Activated CD8-positive, alpha-beta memory T cell treated with anti-CD3 and anti-CD28 coated beads, Interleukin-2, amount 10 ng/mL, durations not matched to agents 7 days and 5 days (primary cell): ENCODE measurements at regions of chr15 and their contacts with region 1.

Region 1: GRCh38 chr15:58070801-58071418 is 5.4 kb upstream of the ALDH1A2 start:
- DNase-seq: peak; percentile 56
- ATAC-seq: no peak
- H3K4me3 Mint-ChIP-seq: no peak overlapping the region
- H3K27ac Mint-ChIP-seq: no peak overlapping the region
- H3K4me1 Mint-ChIP-seq: peaks cover 3% of the 10 kb centered on the region
- H3K27me3 Mint-ChIP-seq: peaks cover 68% of the 10 kb centered on the region

Region 2: GRCh38 chr15:57561041-57561711 is 509.7 kb before region 1 on chr15:
- CTCF ChIA-PET with region 1: interaction called, 10 read pairs
- DNase-seq: peak; percentile 75
- ATAC-seq: peak; percentile 83
- H3K4me3 Mint-ChIP-seq: no peak overlapping the region
- H3K27ac Mint-ChIP-seq: no peak overlapping the region
- H3K4me1 Mint-ChIP-seq: peaks cover 25% of the 10 kb centered on the region
- H3K27me3 Mint-ChIP-seq: peaks cover 27% of the 10 kb centered on the region

Region 3: GRCh38 chr15:57706405-57707209 is 364.3 kb before region 1 on chr15 and contains the start of gene POLR2M:
- CTCF ChIA-PET with region 1: interaction called, 10 read pairs
- DNase-seq: peak; percentile 95
- ATAC-seq: peak; percentile 93
- H3K4me3 Mint-ChIP-seq: peak within 1 kb of the TSS; percentile 77
- H3K27ac Mint-ChIP-seq: peak within 1 kb of the TSS; percentile 86
- H3K4me1 Mint-ChIP-seq: peaks cover 59% of the 10 kb centered on the region
- H3K27me3 Mint-ChIP-seq: peaks cover 6% of the 10 kb centered on the region
- total RNA-seq, gene POLR2M: 66.5 to 70.4 TPM

Region 4: DNA sequence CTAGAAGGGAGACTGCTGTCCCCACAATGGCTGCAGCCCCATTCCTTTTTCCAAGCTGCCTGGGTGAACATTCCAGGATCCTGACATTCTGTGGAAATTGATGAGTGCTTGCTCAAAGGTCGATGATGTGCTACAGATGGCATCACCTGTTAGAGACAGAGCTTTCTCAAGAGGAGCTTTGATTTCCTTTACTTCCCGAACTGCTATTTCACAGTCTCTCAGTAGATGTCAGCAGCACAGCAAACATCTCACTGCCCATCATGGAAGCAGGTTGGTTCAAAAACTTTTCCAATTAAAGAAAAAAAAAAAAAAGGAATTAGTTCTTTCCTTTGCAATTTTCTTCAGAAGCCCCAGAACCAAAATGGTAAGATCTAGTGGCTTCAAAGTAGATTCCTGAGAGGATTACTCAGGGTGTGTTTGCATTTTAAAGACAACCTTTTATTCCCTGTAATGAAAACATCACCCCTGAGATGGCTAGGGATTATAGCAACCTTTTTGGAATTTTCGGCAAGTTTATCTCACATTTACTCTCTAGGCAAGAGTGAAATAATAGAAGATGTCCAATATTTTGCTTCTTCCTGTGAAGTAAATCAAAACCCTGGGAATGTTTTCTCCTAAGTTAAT is 319.6 kb before region 1 on chr15:
- CTCF ChIA-PET with region 1: interaction called, 13 read pairs
- DNase-seq: no peak
- ATAC-seq: no peak
- H3K4me3 Mint-ChIP-seq: no peak overlapping the region
- H3K27ac Mint-ChIP-seq: no peak overlapping the region
- H3K4me1 Mint-ChIP-seq: no peaks in the 10 kb centered on the region
- H3K27me3 Mint-ChIP-seq: peaks cover 2% of the 10 kb centered on the region

Region 5: DNA sequence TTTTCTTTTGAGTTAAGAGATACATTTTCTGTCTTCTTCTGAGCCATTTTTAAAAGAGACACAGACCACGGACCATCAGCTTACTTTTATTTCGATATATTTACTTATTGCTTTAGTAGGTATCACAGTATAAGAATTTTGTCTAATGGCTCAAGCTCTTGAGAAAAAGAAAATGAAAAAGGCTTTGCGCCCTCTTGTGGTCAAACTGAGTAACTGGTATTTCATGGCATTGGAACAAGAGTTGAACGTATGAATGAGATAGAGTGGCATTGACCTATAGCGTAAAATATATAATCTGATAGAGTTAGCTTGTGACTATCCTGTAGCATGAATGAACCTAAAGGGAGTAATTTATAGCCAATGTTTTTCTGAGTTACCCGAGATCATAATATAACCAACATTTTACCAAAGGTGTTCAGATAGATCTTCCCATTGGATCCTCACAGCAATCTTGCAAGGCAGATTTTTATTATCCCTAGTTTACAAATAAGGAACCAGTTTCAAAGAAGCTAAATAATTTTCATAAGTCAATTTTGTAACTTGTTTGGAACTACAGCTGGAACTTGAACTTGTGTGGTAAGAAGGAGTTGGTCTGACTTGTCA is 209.8 kb before region 1 on chr15:
- CTCF ChIA-PET with region 1: interaction called, 27 read pairs
- DNase-seq: no peak
- ATAC-seq: peak; percentile 36
- H3K4me3 Mint-ChIP-seq: no peak overlapping the region
- H3K27ac Mint-ChIP-seq: no peak overlapping the region
- H3K4me1 Mint-ChIP-seq: peaks cover 3% of the 10 kb centered on the region
- H3K27me3 Mint-ChIP-seq: peaks cover 79% of the 10 kb centered on the region

Region 6: GRCh38 chr15:57866149-57866736 is 204.7 kb before region 1 on chr15:
- CTCF ChIA-PET with region 1: interaction called, 27 read pairs
- DNase-seq: peak; percentile 70
- ATAC-seq: no peak
- H3K4me3 Mint-ChIP-seq: no peak overlapping the region
- H3K27ac Mint-ChIP-seq: no peak overlapping the region
- H3K4me1 Mint-ChIP-seq: peaks cover 16% of the 10 kb centered on the region
- H3K27me3 Mint-ChIP-seq: peaks cover 82% of the 10 kb centered on the region